SK-N-SH (cell line): ENCODE measurements at regions of chr2 and their contacts with region 1.

Region 1: GRCh38 chr2:104412384-104412783 is 441.5 kb upstream of the POU3F3 start:
- DNase-seq: peak; percentile 51
- H3K4me3 ChIP-seq: no peak overlapping the region; a peak in 1 of 4 replicates
- H3K27ac ChIP-seq: no peak overlapping the region
- H3K4me1 ChIP-seq: peaks cover 0 to 6% of the 10 kb centered on the region in 2 experiments; a peak in 2 of 4 replicates
- H3K27me3 ChIP-seq: no peaks in the 10 kb centered on the region
- CTCF ChIP-seq: peak; percentile 29
- EP300 ChIP-seq: no peak
- RAD21 ChIP-seq: peak; percentile 62

Region 2: GRCh38 chr2:104425850-104426595 is 13.6 kb after region 1 on chr2:
- CTCF ChIA-PET with region 1: interaction called, 10 read pairs
- POLR2A ChIA-PET with region 1: no interaction called
- DNase-seq: no peak
- H3K4me3 ChIP-seq: no peak overlapping the region
- H3K27ac ChIP-seq: no peak overlapping the region
- H3K4me1 ChIP-seq: no peaks in the 10 kb centered on the region
- H3K27me3 ChIP-seq: no peaks in the 10 kb centered on the region
- CTCF ChIP-seq: no peak
- EP300 ChIP-seq: no peak
- RAD21 ChIP-seq: no peak

Region 3: DNA sequence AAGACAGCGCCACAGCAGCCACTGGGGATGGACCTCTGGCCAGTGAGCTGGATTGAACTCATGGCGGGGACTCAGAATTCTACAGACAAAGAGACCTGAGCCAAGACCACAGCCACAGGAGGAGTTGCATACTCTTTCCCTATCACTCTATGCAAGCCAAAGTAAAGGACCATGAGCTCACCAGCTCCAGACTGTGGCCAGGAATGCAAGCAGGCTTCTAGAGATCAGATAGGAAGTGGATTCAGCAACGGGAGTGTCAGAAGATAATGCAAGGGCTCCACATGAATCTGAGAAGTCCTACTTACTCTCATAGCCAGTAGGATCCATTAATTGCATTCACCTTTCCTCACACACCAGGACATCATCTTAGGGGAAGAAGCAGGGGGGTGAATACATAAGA is 26.1 kb after region 1 on chr2:
- CTCF ChIA-PET with region 1: no interaction called
- POLR2A ChIA-PET with region 1: no interaction called
- DNase-seq: no peak
- H3K4me3 ChIP-seq: no peak overlapping the region
- H3K27ac ChIP-seq: no peak overlapping the region
- H3K4me1 ChIP-seq: peaks cover 0 to 2% of the 10 kb centered on the region in 2 experiments; a peak in 2 of 4 replicates
- H3K27me3 ChIP-seq: no peaks in the 10 kb centered on the region
- CTCF ChIP-seq: no peak
- EP300 ChIP-seq: no peak
- RAD21 ChIP-seq: no peak

Region 4: GRCh38 chr2:104528101-104528500 is 115.7 kb after region 1 on chr2:
- CTCF ChIA-PET with region 1: no interaction called
- POLR2A ChIA-PET with region 1: no interaction called
- DNase-seq: no peak
- H3K4me3 ChIP-seq: no peak overlapping the region
- H3K27ac ChIP-seq: no peak overlapping the region
- H3K4me1 ChIP-seq: no peaks in the 10 kb centered on the region
- H3K27me3 ChIP-seq: no peaks in the 10 kb centered on the region
- CTCF ChIP-seq: no peak
- EP300 ChIP-seq: no peak
- RAD21 ChIP-seq: no peak

Region 5: GRCh38 chr2:105220604-105221003 is 808.2 kb after region 1 on chr2:
- CTCF ChIA-PET with region 1: no interaction called
- POLR2A ChIA-PET with region 1: no interaction called
- DNase-seq: peak; percentile 65
- H3K4me3 ChIP-seq: no peak overlapping the region
- H3K27ac ChIP-seq: peak overlapping the region in 1 of 2 experiments; percentile 83; a peak in 2 of 4 replicates
- H3K4me1 ChIP-seq: peaks cover 0 to 18% of the 10 kb centered on the region in 2 experiments; a peak in 2 of 4 replicates
- H3K27me3 ChIP-seq: no peaks in the 10 kb centered on the region; the same call in 1 of the 2 replicates
- CTCF ChIP-seq: no peak
- EP300 ChIP-seq: peak in 1 of 2 experiments; percentile 83; a peak in 2 of 4 replicates
- RAD21 ChIP-seq: no peak